Panc1 (cell line): ENCODE measurements at regions of chr1 and their contacts with region 1.

Region 1: GRCh38 chr1:21834094-21834493 is 22.0 kb downstream of the LDLRAD2 start:
- DNase-seq: no peak
- ATAC-seq: no peak
- H3K4me3 ChIP-seq: no peak overlapping the region
- H3K27ac ChIP-seq: no peak overlapping the region
- H3K4me1 ChIP-seq: no peaks in the 10 kb centered on the region
- H3K27me3 ChIP-seq: no peaks in the 10 kb centered on the region
- CTCF ChIP-seq: no peak

Region 2: DNA sequence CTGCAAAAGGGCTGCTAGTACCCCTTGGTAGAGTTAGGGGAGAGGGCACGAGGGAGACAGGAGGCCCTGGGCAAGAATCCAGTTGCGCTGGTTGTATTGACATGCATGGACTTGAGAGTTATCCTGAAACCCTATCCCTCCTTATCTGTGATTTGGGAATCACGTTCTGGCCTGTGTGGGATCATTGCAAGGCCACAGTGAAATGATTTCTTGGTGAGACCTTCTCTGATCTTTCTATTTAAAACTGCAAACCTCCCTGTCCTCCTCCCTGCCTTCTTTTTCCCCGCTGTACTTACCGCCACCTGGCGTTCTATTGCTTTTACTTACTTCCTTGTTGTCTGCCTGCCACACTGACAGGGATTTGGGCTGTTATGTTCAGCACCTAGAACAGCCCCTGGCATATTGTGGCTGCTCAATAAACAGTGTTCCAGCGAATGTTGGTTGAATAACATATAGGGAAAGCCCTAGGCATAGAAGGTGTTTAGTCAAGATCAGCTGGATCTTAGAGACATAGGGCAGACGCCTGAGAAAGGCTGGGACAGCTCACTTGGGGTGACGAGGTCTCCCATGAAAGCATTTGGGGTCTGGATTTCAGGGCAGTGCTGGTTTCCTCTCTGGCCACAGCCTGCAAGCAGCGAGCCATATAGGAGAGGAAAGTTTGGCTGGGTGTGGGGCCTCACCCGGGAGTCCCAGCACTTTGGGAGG is 299.3 kb before region 1 on chr1:
- CTCF ChIA-PET with region 1: no interaction called
- POLR2A ChIA-PET with region 1: no interaction called
- in situ Hi-C with region 1: no loop called
- intact Hi-C with region 1: no loop called
- DNase-seq: peak; percentile 28
- ATAC-seq: peak; percentile 86
- H3K4me3 ChIP-seq: no peak overlapping the region
- H3K27ac ChIP-seq: no peak overlapping the region
- H3K4me1 ChIP-seq: no peaks in the 10 kb centered on the region
- H3K27me3 ChIP-seq: no peaks in the 10 kb centered on the region
- CTCF ChIP-seq: peak; percentile 85

Region 3: DNA sequence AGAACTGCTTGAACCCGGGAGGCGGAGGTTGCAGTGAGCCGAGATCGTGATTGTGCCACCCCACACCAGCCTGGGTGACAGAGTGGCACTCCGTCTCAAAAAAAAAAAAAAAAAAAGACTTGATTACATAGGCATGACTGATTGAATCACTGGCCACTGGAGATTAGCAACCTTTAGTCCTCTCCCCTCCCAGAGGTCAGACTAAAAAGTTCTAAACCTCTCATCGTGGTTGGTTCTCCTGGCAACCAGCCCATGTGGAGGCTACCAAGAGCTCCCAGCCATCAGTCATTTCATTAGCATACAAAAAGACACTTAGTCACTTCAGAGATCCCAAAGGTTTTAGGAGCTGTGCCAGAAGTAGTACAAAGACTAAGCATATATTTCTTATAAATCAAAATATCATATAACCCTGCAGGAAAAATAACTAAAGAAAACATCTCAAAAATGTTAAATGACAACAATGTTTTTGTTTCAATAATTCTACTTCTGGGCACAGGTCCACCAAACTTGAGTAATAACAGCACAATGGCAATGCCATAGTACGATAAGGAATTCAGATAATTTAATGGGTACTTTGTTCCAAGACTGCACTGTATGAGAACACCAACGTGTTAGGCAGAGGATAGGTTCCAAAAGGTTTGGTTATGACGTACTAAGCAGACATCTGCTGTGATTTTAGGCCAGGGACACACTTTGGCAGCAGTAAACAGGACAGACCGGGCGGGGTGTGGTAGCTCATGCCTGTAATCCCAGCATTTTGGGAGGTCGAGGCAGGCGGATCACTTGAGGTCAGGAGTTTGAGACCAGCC is 69.3 kb before region 1 on chr1:
- CTCF ChIA-PET with region 1: no interaction called
- POLR2A ChIA-PET with region 1: interaction called, 13 read pairs
- in situ Hi-C with region 1: no loop called
- intact Hi-C with region 1: no loop called
- DNase-seq: no peak
- ATAC-seq: peak; percentile 79
- H3K4me3 ChIP-seq: no peak overlapping the region
- H3K27ac ChIP-seq: no peak overlapping the region
- H3K4me1 ChIP-seq: peaks cover 17% of the 10 kb centered on the region
- H3K27me3 ChIP-seq: no peaks in the 10 kb centered on the region
- CTCF ChIP-seq: no peak